Dorsolateral prefrontal cortex (tissue), 120 donors: ENCODE measurements at regions of chr9 and their contacts with region 1.

Region 1: GRCh38 chr9:26789959-26790358 is 102.6 kb downstream of the CAAP1 start:
- DNase-seq: no peak
- H3K4me3 ChIP-seq: no peak overlapping the region
- H3K27ac ChIP-seq: peak overlapping the region in 1 of 59 donors; percentile 9
- H3K27me3 ChIP-seq: no peaks in the 10 kb centered on the region
- CTCF ChIP-seq: no peak

Region 2: DNA sequence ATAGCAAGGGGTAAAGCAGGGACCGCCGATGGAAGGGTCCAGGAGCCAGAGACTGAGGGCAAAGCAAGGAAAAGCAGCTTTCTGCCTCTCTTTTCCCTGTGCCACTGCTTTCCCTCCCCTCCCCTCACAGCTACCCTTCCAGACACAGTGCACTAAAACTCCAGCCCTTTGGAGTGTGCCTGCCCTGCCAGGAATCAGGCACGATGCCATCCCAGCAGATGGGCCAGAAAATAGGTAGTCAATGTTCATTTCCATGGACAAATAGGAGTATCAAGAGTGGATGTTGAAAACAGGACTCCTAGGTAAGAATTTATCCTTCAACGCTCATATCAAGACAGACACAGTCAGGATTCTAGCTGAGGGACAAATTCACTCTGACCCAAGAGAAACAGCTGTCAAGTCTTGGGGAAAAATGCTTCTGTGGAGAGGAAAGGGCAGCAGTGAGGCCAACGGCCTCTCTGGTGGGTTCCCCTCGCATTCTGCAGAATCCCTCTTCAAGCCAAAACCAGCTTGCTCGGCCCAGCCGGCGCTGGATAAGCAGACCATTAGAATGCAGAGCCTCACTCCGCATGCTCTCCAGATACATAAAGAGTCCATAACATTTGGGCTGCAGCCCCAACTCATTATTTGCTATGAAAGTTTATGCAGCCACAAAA is 35.3 kb before region 1 on chr9:
- intact Hi-C with region 1: loop called in 1 of 2 experiments (anchors 5 kb)
- DNase-seq: no peak
- H3K4me3 ChIP-seq: no peak overlapping the region
- H3K27ac ChIP-seq: peak overlapping the region in 3 of 59 donors; percentile 5 to 42 (median 31)
- H3K27me3 ChIP-seq: no peaks in the 10 kb centered on the region
- CTCF ChIP-seq: no peak

Region 3: DNA sequence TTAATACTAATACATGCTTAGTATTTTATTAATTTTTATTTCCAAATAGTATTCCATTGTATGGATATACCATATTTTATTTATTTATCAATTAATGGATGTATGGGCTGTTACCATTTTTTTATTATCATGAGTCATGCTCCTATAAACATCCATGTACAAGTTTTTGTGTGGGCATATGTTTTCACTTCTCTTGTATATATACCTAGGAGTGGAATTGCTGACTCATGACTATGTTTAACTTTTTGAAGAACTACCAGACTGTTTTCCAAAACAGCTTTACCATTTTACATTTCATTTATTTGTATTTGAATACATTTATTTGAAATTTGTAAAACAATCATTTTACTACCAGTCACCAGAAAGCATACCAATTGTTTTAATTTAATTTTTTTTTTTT is 229.6 kb after region 1 on chr9:
- intact Hi-C with region 1: no loop called
- DNase-seq: no peak
- H3K4me3 ChIP-seq: no peak overlapping the region
- H3K27ac ChIP-seq: no peak overlapping the region
- H3K27me3 ChIP-seq: no peaks in the 10 kb centered on the region
- CTCF ChIP-seq: no peak